ENCODE measurements at regions of chr9 and their contacts with region 1.

Region 1: DNA sequence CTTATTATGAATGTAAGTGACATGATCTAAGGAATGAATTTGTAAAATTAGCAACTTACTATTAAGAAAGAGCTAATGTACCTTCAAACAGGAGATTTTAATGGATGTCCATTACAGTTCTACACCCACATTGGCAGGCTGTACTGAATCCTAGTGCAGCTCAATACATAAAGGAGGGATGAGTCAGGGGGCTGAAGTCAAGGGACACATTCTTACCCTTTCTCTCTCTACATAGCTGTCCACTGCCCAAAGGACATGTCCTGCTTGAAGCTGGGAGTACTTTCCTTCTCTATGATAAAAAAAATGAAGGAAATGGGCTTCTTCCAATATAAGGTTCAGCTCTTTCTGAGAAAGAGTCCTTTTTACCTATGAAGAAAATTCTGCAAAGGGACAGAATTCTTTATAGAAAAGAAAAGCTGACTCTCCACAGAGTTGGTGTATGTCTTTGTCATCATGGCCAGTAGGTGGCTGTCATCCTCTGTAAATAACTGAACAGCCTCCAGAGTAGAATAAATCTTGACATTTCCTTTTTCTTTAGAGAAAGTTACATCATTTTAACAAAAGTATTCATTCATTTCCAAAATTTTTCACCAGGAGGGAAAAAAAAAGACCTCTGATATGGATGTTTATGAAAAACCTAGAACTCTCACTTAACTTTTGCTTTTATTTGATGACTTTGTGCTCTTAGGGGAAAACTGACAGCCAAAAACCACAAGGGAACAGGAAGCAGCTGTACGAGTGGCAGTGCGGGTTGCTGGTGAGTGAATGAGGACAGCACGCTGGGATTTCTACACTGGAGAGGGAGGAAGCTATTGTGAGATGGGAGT is 13.1 kb upstream of the IFNA14 start:
- DNase-seq: peak; percentile 31
- H3K4me3 Mint-ChIP-seq: no peak overlapping the region
- H3K27ac Mint-ChIP-seq: no peak overlapping the region
- H3K4me1 Mint-ChIP-seq: peaks cover 4% of the 10 kb centered on the region
- H3K27me3 Mint-ChIP-seq: peaks cover 10% of the 10 kb centered on the region

Region 2: GRCh38 chr9:21234153-21234687 is 18.7 kb before region 1 on chr9:
- CTCF ChIA-PET with region 1: interaction called, 10 read pairs
- POLR2A ChIA-PET with region 1: no interaction called
- intact Hi-C with region 1: no loop called
- DNase-seq: no peak
- H3K4me3 Mint-ChIP-seq: no peak overlapping the region
- H3K27ac Mint-ChIP-seq: no peak overlapping the region
- H3K4me1 Mint-ChIP-seq: peaks cover 9% of the 10 kb centered on the region
- H3K27me3 Mint-ChIP-seq: peaks cover 2% of the 10 kb centered on the region

Region 3: DNA sequence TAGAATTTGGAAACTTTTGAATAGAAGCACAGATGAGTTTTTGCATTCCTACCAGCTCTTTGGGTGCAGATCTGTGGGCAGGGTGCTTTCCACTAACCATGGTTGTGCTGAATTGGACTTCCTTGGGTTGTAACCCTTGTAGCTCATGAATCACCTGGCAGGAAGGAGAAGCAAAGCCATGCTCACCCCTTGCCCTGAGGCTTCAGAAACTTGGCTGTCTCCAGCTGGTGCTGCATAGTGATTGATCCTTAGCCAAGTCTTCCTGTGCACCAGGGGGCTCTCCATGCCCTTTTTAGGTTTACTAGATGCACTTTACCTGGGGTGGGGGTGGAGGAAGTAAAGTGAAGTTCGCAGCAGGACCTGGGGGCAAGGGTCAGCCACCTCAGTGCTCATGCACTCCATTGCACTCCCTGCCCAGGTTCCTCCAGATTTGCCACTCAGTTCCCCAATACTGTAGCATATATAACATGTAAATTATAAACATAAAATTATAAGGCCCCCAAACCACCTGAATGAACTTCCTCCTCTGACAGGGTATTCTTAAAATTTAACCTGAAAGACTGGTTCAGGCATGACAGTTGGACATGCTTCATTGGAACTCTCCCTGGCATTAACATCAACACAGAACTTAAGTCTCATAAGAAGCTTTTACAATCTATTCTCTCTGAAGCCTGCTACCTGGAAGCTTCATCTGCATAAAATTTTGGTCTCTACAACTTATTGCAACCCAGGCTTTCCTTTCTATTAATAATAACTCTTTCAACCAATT is 12.7 kb after region 1 on chr9:
- CTCF ChIA-PET with region 1: interaction called, 15 read pairs
- POLR2A ChIA-PET with region 1: no interaction called
- intact Hi-C with region 1: no loop called
- DNase-seq: no peak
- H3K4me3 Mint-ChIP-seq: no peak overlapping the region
- H3K27ac Mint-ChIP-seq: no peak overlapping the region
- H3K4me1 Mint-ChIP-seq: no peaks in the 10 kb centered on the region
- H3K27me3 Mint-ChIP-seq: peaks cover 7% of the 10 kb centered on the region

Region 4: GRCh38 chr9:21465859-21466518 is 213.1 kb after region 1 on chr9:
- CTCF ChIA-PET with region 1: no interaction called
- POLR2A ChIA-PET with region 1: no interaction called
- intact Hi-C with region 1: loop called (anchors 5 kb)
- DNase-seq: no peak
- H3K4me3 Mint-ChIP-seq: no peak overlapping the region
- H3K27ac Mint-ChIP-seq: no peak overlapping the region
- H3K4me1 Mint-ChIP-seq: no peaks in the 10 kb centered on the region
- H3K27me3 Mint-ChIP-seq: peaks cover 4% of the 10 kb centered on the region

Measured in activated CD4-positive, alpha-beta memory T cell treated with anti-CD3 and anti-CD28 coated beads for 36 hours (primary cell).